ENCODE measurements at regions of chr10 and their contacts with region 1.

Region 1: DNA sequence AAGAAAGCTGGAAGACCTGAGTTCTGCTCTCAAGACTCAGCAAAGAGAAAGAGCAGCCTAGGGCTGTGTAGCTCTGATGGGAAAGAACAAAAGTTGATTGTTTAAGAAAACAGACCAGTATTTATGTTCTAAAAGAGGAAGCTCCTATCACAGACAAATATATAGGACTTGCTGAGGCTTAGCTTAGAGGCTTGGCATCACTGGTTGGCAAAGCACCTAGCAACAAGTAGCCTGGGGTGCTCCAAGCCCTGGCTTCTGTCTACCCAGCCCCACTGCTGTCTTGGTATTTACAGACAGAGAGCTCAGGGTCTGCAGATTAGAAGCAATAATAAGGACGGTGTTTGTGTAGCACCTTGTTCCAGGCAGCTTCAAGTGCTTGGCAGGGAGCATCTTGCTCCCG is 36.9 kb upstream of the CCDC3 start:
- DNase-seq: no peak
- ATAC-seq: no peak
- H3K4me3 ChIP-seq: no peak overlapping the region
- H3K27ac ChIP-seq: no peak overlapping the region
- H3K4me1 ChIP-seq: no peaks in the 10 kb centered on the region
- H3K27me3 ChIP-seq: peaks cover 0 to 18% (median 0%) of the 10 kb centered on the region in 9 donors
- CTCF ChIP-seq: no peak
- POLR2A ChIP-seq: no peak

Region 2: DNA sequence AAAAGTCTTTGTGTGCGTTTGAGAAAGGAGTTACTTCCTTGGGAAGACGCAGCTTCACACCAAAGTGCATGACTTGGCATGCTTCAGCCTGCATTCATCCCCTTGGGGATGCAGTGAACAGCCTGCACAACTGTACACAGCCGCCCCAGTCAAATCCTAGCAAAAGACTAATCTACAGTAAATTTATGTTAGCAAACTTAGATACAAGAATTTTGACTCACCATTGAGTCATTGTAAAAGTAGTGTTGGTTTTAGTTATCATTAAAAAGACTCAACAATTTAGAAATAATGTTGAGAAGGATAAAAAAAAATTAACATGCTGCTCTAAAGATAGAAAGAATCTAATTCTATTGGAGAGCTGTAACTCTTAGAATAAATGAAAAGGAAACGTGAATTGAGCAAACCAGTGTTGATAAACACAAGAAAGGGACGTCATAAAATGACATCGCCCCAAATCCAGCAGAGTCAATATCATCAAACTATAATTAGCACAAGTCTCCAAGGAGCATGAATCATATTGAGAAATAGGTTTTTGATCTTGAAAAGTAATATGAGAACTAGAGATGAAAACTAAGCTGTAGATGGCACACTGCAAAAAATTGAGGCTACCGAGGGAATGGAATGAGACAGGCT is 49.7 kb after region 1 on chr10:
- intact Hi-C with region 1: loop called in 1 of 10 experiments (anchors 5 kb)
- DNase-seq: no peak
- ATAC-seq: peak in 2 of 4 donors; percentile 47 to 52
- H3K4me3 ChIP-seq: no peak overlapping the region
- H3K27ac ChIP-seq: peak overlapping the region in 5 of 12 donors; percentile 14 to 40 (median 34)
- H3K4me1 ChIP-seq: peaks cover 0 to 18% (median 0%) of the 10 kb centered on the region in 12 donors
- H3K27me3 ChIP-seq: no peaks in the 10 kb centered on the region
- CTCF ChIP-seq: no peak
- POLR2A ChIP-seq: no peak

Measured in heart left ventricle (tissue), 16 donors.